Naive thymus-derived CD4-positive, alpha-beta T cell (primary cell): ENCODE measurements at regions of chr2 and their contacts with region 1.

Region 1: DNA sequence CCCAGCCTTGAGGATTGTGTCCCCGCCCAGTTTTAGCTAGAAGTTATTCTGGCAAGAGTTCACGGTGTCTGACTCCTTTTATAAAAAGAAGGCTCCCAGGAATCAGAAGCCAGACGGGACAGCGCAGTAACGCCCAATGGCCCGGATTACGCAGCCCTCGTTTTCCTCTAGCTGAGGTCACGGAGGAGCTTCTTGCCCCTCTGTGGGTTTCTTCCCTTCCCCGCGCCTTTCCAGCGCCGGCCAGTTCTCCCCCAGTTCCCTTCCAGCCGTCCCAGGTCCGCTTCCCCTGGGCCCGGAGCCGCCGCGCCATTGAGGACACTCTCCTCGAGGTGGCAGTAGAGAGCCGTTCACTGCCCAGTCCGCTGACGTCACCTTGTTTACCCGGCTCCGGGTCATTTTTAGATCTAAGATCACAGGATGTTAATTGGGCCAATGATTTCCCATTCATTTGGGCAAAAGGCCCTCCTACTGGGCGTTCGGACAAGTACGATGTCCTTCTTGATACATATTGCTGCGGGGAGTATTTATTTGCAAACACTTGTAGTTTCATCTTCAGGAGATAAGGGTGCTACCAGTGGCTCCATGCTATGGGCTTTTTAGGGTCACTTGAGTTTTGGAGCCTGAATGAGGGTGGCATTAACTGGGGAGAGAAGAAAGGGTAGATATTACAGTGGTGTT is 81.5 kb upstream of the PPM1B start:
- DNase-seq: peak; percentile 62 to 86 (median 77)
- ATAC-seq: peak; percentile 97
- H3K4me3 ChIP-seq: peak overlapping the region; percentile 68
- H3K4me3 Mint-ChIP-seq: peak overlapping the region; percentile 60 to 92 (median 86)
- H3K27ac ChIP-seq: peak overlapping the region; percentile 77
- H3K27ac Mint-ChIP-seq: peak overlapping the region; percentile 79 to 98 (median 91)
- H3K4me1 ChIP-seq: peaks cover 0 to 9% of the 10 kb centered on the region in 2 donors
- H3K4me1 Mint-ChIP-seq: peaks cover 4 to 30% (median 15%) of the 10 kb centered on the region in 7 donors
- H3K27me3 ChIP-seq: no peaks in the 10 kb centered on the region
- H3K27me3 Mint-ChIP-seq: no peaks in the 10 kb centered on the region

Region 2: DNA sequence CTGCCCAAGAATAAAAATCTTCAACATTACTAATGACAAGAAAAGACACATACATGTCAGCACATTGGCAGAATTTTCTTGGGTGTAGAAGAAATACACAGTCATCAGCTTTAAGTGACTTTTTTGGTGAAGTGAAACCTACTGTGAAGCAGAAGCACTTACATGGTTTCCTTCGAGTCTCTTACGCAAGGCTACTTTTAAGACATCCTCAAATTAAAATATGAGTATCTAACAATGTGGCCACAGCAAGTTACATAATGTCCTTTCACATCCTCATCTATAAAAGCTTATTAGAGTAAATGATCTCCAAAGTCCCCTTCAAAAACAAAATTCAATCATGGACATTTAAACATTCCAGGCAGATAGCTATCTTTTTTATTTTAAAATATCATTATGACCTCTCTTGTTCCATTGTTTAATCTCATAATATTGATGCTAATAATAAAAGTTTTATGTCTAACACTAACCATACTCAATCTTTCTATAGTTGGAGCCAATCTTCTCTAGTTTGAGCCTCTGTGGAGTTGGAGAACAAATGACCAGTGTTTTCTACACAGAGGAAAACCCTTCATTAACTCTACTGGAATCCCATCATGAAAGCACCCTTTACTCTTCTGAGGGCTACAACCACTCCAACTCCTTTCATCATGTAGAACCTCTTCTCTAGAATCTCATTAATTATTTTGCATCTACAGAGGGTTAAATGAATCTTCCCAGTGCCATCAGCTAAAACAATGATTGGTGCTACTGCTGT is 678.6 kb before region 1 on chr2:
- CTCF ChIA-PET with region 1: no interaction called
- POLR2A ChIA-PET with region 1: no interaction called
- intact Hi-C with region 1: no loop called
- DNase-seq: no peak
- ATAC-seq: peak; percentile 87
- H3K4me3 ChIP-seq: no peak overlapping the region
- H3K4me3 Mint-ChIP-seq: no peak overlapping the region
- H3K27ac ChIP-seq: no peak overlapping the region
- H3K27ac Mint-ChIP-seq: no peak overlapping the region
- H3K4me1 ChIP-seq: no peaks in the 10 kb centered on the region
- H3K4me1 Mint-ChIP-seq: peaks cover 0 to 10% (median 0%) of the 10 kb centered on the region in 7 donors
- H3K27me3 ChIP-seq: no peaks in the 10 kb centered on the region
- H3K27me3 Mint-ChIP-seq: no peaks in the 10 kb centered on the region

Region 3: GRCh38 chr2:43519643-43520221 is 567.4 kb before region 1 on chr2:
- CTCF ChIA-PET with region 1: no interaction called
- POLR2A ChIA-PET with region 1: no interaction called
- intact Hi-C with region 1: no loop called
- DNase-seq: no peak
- ATAC-seq: peak; percentile 34
- H3K4me3 ChIP-seq: no peak overlapping the region
- H3K4me3 Mint-ChIP-seq: no peak overlapping the region
- H3K27ac ChIP-seq: no peak overlapping the region
- H3K27ac Mint-ChIP-seq: peak overlapping the region in 6 of 9 donors; percentile 22 to 46 (median 26)
- H3K4me1 ChIP-seq: no peaks in the 10 kb centered on the region
- H3K4me1 Mint-ChIP-seq: peaks cover 7 to 41% (median 18%) of the 10 kb centered on the region in 7 donors
- H3K27me3 ChIP-seq: no peaks in the 10 kb centered on the region
- H3K27me3 Mint-ChIP-seq: no peaks in the 10 kb centered on the region

Region 4: GRCh38 chr2:44044281-44044720 is 42.9 kb before region 1 on chr2:
- CTCF ChIA-PET with region 1: interaction called, 3 read pairs
- POLR2A ChIA-PET with region 1: no interaction called
- intact Hi-C with region 1: loop called in 1 of 2 experiments (anchors 1 kb)
- DNase-seq: peak; percentile 50 to 78 (median 71)
- ATAC-seq: peak; percentile 98
- H3K4me3 ChIP-seq: no peak overlapping the region
- H3K4me3 Mint-ChIP-seq: peak overlapping the region in 1 of 10 donors; percentile 48
- H3K27ac ChIP-seq: no peak overlapping the region
- H3K27ac Mint-ChIP-seq: no peak overlapping the region
- H3K4me1 ChIP-seq: no peaks in the 10 kb centered on the region
- H3K4me1 Mint-ChIP-seq: peaks cover 0 to 2% (median 0%) of the 10 kb centered on the region in 7 donors
- H3K27me3 ChIP-seq: no peaks in the 10 kb centered on the region
- H3K27me3 Mint-ChIP-seq: peaks cover 0 to 3% (median 0%) of the 10 kb centered on the region in 5 donors

Region 5: GRCh38 chr2:44233450-44234128 is 146.4 kb after region 1 on chr2:
- CTCF ChIA-PET with region 1: no interaction called
- POLR2A ChIA-PET with region 1: interaction called, 3 read pairs
- intact Hi-C with region 1: loop called in 1 of 2 experiments (anchors 2 kb)
- DNase-seq: no peak
- ATAC-seq: no peak
- H3K4me3 ChIP-seq: no peak overlapping the region
- H3K4me3 Mint-ChIP-seq: no peak overlapping the region
- H3K27ac ChIP-seq: no peak overlapping the region
- H3K27ac Mint-ChIP-seq: peak overlapping the region in 4 of 9 donors; percentile 25 to 71 (median 48)
- H3K4me1 ChIP-seq: peaks cover 16 to 17% of the 10 kb centered on the region in 2 donors
- H3K4me1 Mint-ChIP-seq: peaks cover 6 to 46% (median 36%) of the 10 kb centered on the region in 7 donors
- H3K27me3 ChIP-seq: no peaks in the 10 kb centered on the region
- H3K27me3 Mint-ChIP-seq: no peaks in the 10 kb centered on the region

Region 6: GRCh38 chr2:44291281-44292248 is 204.4 kb after region 1 on chr2:
- CTCF ChIA-PET with region 1: interaction called, 5 read pairs
- POLR2A ChIA-PET with region 1: interaction called, 3 read pairs
- intact Hi-C with region 1: loop called (anchors 1 to 5 kb)
- DNase-seq: no peak
- ATAC-seq: no peak
- H3K4me3 ChIP-seq: no peak overlapping the region
- H3K4me3 Mint-ChIP-seq: no peak overlapping the region
- H3K27ac ChIP-seq: no peak overlapping the region
- H3K27ac Mint-ChIP-seq: peak overlapping the region in 1 of 9 donors; percentile 33
- H3K4me1 ChIP-seq: peaks cover 0 to 1% of the 10 kb centered on the region in 2 donors
- H3K4me1 Mint-ChIP-seq: peaks cover 2 to 11% (median 10%) of the 10 kb centered on the region in 7 donors
- H3K27me3 ChIP-seq: no peaks in the 10 kb centered on the region
- H3K27me3 Mint-ChIP-seq: peaks cover 0 to 14% (median 5%) of the 10 kb centered on the region in 5 donors

Region 7: DNA sequence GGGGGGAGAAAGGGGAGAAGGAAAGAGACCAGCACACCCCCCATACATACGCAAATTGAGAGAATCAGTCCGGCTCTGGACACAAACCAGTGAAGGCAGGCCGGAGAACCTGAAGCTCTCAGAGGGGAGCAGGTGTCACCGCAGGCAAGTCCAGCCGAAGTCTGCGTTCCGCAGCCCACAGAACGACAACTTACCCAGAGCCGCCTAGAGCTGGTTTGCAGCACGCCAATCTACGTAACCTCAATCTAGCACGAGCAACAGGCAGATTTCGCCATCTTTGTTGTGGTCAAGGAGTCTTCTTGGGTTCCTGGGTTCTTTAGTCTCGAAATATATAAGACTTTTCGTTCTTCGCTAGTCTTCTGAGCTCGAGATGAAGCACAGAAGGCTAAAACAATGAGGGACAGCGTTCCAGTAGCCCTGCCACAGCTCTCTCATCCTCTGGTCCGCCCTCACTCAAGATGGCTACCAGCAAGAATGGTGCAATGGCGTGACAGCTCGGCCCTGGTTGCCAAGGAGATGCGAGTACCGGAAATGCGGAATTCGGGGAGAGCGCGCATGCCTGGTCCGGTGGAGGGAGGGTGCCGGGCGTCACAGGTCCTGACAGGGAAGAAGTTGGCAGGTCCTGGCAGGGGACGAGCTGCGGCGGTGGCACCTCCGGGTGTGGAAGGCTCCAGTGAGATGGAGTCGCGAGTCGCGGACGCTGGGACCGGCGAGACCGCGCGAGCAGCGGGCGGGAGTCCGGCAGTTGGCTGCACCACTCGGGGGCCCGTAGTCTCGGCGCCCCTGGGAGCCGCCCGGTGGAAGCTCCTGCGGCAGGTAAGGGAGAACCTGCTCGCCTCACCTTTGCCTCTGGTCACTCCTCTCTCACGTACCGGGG is 274.4 kb after region 1 on chr2 and contains the starts of genes CAMKMT and PREPL:
- CTCF ChIA-PET with region 1: interaction called, 3 read pairs
- POLR2A ChIA-PET with region 1: no interaction called
- intact Hi-C with region 1: loop called in 1 of 2 experiments (anchors 1 kb)
- DNase-seq: peak; percentile 95 to 99 (median 99)
- ATAC-seq: peak; percentile 93
- H3K4me3 ChIP-seq: peak within 1 kb of the TSS; percentile 88
- H3K4me3 Mint-ChIP-seq: peak within 1 kb of the TSS; percentile 92 to 100 (median 98)
- H3K27ac ChIP-seq: peak within 1 kb of the TSS; percentile 99
- H3K27ac Mint-ChIP-seq: peak within 1 kb of the TSS; percentile 96 to 100 (median 99)
- H3K4me1 ChIP-seq: peaks cover 16 to 17% of the 10 kb centered on the region in 2 donors
- H3K4me1 Mint-ChIP-seq: peaks cover 22 to 81% (median 61%) of the 10 kb centered on the region in 7 donors
- H3K27me3 ChIP-seq: no peaks in the 10 kb centered on the region
- H3K27me3 Mint-ChIP-seq: peaks cover 0 to 3% (median 0%) of the 10 kb centered on the region in 5 donors
- total RNA-seq, gene CAMKMT: 11.1 to 20.8 (median 18.7) TPM
- total RNA-seq, gene PREPL: 22.0 to 41.9 (median 28.5) TPM

Region 8: DNA sequence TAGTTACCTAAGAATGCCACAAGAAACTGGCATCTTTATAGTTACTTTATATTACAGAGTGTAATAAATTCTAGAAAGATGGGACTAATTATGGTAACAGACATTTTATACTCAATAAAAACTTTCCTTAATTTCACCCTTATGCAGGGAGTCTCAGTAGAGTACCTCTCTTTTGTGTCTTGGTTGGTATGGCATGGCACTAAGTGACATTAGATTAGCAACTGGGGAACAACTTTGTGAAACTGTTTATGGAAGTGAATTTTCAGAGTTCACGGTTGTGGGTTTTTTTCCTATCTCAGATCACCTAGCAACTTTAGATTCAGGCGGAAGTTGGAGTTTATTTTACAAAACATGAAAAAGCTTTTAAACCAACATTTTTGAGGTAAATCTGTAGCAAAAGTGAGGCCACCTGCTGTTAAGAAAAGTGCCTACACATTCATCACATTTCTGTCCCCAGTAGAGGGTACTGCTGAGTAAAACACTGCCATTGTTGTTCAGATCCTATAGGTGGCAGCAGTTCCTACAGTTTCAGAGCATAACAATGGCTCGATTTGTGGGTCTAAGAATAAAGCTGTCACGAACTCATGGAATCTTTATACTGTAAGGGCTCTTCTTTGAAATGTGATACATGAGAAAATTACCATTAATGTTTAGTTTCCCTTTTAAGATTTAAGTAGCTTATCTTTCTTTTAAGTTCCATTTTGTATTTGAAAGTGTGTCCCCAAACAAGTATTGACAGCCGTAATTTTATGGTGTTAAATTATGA is 392.1 kb after region 1 on chr2:
- CTCF ChIA-PET with region 1: interaction called, 4 read pairs
- POLR2A ChIA-PET with region 1: no interaction called
- intact Hi-C with region 1: loop called (anchors 1 kb)
- DNase-seq: peak in 8 of 9 donors; percentile 23 to 79 (median 68)
- ATAC-seq: peak; percentile 100
- H3K4me3 ChIP-seq: no peak overlapping the region
- H3K4me3 Mint-ChIP-seq: peak overlapping the region in 1 of 10 donors; percentile 8
- H3K27ac ChIP-seq: no peak overlapping the region
- H3K27ac Mint-ChIP-seq: peak overlapping the region in 5 of 9 donors; percentile 5 to 55 (median 38)
- H3K4me1 ChIP-seq: peaks cover 0 to 4% of the 10 kb centered on the region in 2 donors
- H3K4me1 Mint-ChIP-seq: peaks cover 0 to 11% (median 6%) of the 10 kb centered on the region in 7 donors
- H3K27me3 ChIP-seq: no peaks in the 10 kb centered on the region
- H3K27me3 Mint-ChIP-seq: no peaks in the 10 kb centered on the region